Common myeloid progenitor, CD34-positive (primary cell): ENCODE measurements at regions of chr3 and their contacts with region 1.

Region 1: GRCh38 chr3:49093853-49094767 is at the start of gene QRICH1:
- DNase-seq: peak; percentile 98 to 99 (median 99)
- H3K4me3 ChIP-seq: peak within 1 kb of the TSS; percentile 90 to 99 (median 95)
- H3K27ac ChIP-seq: peak within 1 kb of the TSS; percentile 93 to 97
- H3K4me1 ChIP-seq: peaks cover 11 to 30% (median 24%) of the 10 kb centered on the region in 4 experiments
- H3K27me3 ChIP-seq: no peaks in the 10 kb centered on the region

Region 2: GRCh38 chr3:48847504-48848423 is 246.3 kb before region 1 on chr3 and contains the start of gene PRKAR2A:
- CTCF ChIA-PET with region 1: no interaction called
- POLR2A ChIA-PET with region 1: no interaction called
- DNase-seq: peak; percentile 83 to 89 (median 88)
- H3K4me3 ChIP-seq: peak within 1 kb of the TSS; percentile 50 to 84 (median 74)
- H3K27ac ChIP-seq: peak within 1 kb of the TSS in 1 of 2 experiments; percentile 64
- H3K4me1 ChIP-seq: peaks cover 9 to 26% (median 20%) of the 10 kb centered on the region in 4 experiments
- H3K27me3 ChIP-seq: no peaks in the 10 kb centered on the region

Region 3: GRCh38 chr3:49007068-49007770 is 86.9 kb before region 1 on chr3 and contains the start of gene WDR6:
- CTCF ChIA-PET with region 1: interaction called, 3 read pairs
- POLR2A ChIA-PET with region 1: interaction called, 10 read pairs
- DNase-seq: peak; percentile 97 to 99 (median 99)
- H3K4me3 ChIP-seq: peak within 1 kb of the TSS; percentile 58 to 87 (median 83)
- H3K27ac ChIP-seq: peak within 1 kb of the TSS; percentile 85 to 94
- H3K4me1 ChIP-seq: peaks cover 1 to 23% (median 23%) of the 10 kb centered on the region in 4 experiments
- H3K27me3 ChIP-seq: no peaks in the 10 kb centered on the region

Region 4: DNA sequence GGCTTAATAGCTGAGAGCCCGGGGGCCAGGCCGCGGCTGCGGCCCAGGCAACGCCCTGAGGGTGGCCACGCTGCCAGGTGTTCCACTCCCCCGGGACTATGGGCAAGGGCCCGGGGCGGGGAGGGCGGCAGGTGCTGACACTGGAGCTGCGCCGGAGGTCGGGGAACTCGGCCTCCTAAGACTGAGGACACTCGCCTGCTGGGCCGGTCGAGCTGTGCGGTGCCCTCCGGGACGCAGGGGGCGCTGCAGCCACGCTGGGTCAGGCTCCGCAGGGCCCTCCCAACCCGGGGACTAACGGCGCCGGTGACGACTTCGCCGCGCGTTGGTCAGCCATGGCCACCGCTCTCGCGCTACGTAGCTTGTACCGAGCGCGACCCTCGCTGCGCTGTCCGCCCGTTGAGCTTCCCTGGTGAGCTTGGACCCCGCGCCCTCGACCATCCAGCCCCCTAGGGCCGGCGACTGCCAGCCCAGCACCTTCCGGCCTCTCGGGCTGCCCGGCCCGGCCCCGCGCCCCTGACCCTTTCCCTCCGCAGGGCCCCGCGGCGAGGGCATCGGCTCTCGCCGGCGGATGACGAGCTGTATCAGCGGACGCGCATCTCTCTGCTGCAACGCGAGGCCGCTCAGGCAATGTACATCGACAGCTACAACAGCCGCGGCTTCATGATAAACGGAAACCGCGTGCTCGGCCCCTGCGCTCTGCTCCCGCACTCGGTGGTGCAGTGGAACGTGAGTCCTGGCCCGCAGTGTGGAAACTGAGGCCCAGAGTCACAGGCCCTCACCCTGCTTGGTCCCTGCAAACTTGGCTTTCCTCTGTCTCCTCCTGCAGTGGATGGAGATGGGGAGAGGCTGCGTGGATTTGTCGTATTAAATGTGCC is 72.1 kb before region 1 on chr3 and contains the start of gene NDUFAF3:
- CTCF ChIA-PET with region 1: interaction called, 3 read pairs
- POLR2A ChIA-PET with region 1: interaction called, 26 read pairs
- DNase-seq: peak; percentile 91 to 93 (median 92)
- H3K4me3 ChIP-seq: peak within 1 kb of the TSS; percentile 73 to 94 (median 82)
- H3K27ac ChIP-seq: peak within 1 kb of the TSS; percentile 95 to 98
- H3K4me1 ChIP-seq: peaks cover 6 to 70% (median 52%) of the 10 kb centered on the region in 4 experiments
- H3K27me3 ChIP-seq: no peaks in the 10 kb centered on the region

Region 5: GRCh38 chr3:49028673-49029562 is 65.2 kb before region 1 on chr3 and contains the start of gene IMPDH2:
- CTCF ChIA-PET with region 1: no interaction called
- POLR2A ChIA-PET with region 1: interaction called, 15 read pairs
- DNase-seq: peak; percentile 94 to 97 (median 95)
- H3K4me3 ChIP-seq: peak within 1 kb of the TSS; percentile 52 to 80 (median 75)
- H3K27ac ChIP-seq: peak within 1 kb of the TSS; percentile 77 to 91
- H3K4me1 ChIP-seq: peaks cover 8 to 49% (median 25%) of the 10 kb centered on the region in 4 experiments
- H3K27me3 ChIP-seq: no peaks in the 10 kb centered on the region

Region 6: DNA sequence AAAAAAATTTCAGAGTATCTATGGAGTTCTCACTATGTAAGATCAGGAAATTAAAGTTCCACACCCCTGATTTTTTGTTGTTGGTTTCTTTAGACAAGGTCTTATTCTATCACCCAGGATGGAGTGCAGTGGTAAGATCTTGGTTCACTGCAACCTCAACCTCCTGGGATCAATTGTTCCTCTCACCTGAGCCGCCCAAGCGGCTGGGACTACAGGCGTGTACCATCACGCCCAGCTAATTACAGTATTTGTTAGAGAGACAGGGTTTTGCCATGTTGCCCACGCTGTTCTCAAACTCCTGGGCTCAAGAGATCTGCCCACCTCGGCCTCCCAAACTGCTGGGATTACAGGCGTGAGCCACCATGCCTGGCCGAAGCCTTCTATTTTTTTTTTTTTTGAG is 12.7 kb before region 1 on chr3:
- CTCF ChIA-PET with region 1: interaction called, 27 read pairs
- POLR2A ChIA-PET with region 1: interaction called, 3 read pairs
- DNase-seq: no peak
- H3K4me3 ChIP-seq: no peak overlapping the region
- H3K27ac ChIP-seq: no peak overlapping the region
- H3K4me1 ChIP-seq: no peaks in the 10 kb centered on the region
- H3K27me3 ChIP-seq: no peaks in the 10 kb centered on the region

Region 7: DNA sequence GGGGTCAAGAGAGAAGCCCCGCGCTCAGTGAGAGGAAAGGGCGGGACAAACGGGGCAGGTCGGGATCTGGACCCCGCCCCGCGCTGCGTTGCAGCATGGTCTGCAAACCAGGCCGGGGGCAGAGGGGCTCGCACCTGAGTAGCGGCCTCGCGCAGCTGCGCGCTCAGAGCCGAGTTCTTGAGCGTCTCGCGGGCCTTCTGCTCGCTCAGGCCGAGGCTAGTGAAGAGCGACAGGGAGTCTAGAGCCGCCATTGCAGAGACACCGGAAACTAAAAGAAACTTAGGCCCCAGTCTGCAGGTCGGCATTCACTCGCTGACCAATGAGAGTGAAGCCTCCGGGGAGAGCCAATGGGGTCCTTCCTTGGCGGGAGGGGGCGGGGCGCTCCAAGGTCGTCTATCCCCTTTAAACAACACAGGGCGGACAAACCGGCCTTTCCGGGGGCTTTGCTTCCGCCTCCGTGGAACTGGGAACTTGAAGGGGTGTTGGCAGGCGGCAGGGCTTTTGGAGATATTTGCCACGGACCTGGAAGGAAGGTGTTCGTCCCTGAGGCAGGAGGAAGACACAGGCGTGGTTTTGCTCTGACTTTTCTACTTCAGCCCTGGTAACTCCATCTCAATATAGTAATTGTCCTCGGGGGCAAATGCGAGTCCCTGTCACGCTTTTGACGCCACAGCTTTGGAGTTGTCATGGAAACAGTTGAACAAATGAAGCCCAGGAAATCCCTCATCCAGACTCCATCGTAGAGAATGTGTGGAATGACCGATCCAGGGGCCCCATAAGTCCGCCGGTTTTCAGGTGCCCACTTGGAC is 10.6 kb after region 1 on chr3 and contains the start of gene QARS1:
- CTCF ChIA-PET with region 1: interaction called, 41 read pairs
- POLR2A ChIA-PET with region 1: interaction called, 7 read pairs
- DNase-seq: peak; percentile 83 to 89 (median 88)
- H3K4me3 ChIP-seq: peak within 1 kb of the TSS; percentile 83 to 97 (median 91)
- H3K27ac ChIP-seq: peak within 1 kb of the TSS; percentile 68 to 84
- H3K4me1 ChIP-seq: peaks cover 3 to 27% (median 21%) of the 10 kb centered on the region in 4 experiments
- H3K27me3 ChIP-seq: no peaks in the 10 kb centered on the region

Region 8: DNA sequence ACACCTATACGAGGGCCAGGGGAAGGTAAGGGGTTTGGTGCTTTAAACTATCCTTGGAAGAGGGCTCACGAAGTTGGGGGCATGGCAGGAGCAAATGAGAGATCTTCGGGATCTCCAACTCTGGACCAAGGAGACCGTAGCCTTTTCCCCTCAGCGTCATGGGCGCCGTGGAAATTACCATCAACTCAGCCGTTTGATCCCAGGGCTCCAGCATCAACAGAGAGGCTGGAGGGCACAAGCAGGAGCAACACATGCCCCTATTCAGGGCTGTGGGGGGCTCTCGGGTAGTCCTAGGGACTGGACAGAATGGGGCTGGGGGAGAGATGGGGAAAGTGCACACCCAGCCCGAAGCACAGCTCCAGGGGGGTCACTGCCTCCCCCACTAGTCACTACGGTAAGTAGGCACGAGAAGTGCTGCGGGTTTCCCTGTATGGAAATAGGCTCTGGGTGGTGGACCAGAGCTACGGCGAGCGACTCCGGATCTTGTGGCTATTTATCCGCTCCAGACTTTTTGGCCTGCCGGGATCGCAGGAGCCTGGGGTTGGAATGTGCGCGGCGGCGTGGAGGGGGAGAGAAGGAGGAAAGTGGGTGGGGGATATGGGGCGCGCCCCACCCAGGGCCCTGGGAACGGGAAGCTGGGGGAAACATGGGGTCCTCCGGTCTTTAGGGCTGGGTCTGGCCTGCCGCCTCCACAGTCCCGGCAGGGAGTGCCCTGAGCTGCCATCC is 39.3 kb after region 1 on chr3:
- CTCF ChIA-PET with region 1: interaction called, 8 read pairs
- POLR2A ChIA-PET with region 1: interaction called, 11 read pairs
- DNase-seq: peak; percentile 50 to 70 (median 65)
- H3K4me3 ChIP-seq: peak overlapping the region; percentile 19 to 77 (median 53)
- H3K27ac ChIP-seq: peak overlapping the region; percentile 33 to 77
- H3K4me1 ChIP-seq: peaks cover 5 to 25% (median 18%) of the 10 kb centered on the region in 4 experiments
- H3K27me3 ChIP-seq: peaks cover 0 to 1% (median 0%) of the 10 kb centered on the region in 5 experiments